CD4-positive, alpha-beta T cell (primary cell): ENCODE measurements at regions of chr22 and their contacts with region 1.

Region 1: DNA sequence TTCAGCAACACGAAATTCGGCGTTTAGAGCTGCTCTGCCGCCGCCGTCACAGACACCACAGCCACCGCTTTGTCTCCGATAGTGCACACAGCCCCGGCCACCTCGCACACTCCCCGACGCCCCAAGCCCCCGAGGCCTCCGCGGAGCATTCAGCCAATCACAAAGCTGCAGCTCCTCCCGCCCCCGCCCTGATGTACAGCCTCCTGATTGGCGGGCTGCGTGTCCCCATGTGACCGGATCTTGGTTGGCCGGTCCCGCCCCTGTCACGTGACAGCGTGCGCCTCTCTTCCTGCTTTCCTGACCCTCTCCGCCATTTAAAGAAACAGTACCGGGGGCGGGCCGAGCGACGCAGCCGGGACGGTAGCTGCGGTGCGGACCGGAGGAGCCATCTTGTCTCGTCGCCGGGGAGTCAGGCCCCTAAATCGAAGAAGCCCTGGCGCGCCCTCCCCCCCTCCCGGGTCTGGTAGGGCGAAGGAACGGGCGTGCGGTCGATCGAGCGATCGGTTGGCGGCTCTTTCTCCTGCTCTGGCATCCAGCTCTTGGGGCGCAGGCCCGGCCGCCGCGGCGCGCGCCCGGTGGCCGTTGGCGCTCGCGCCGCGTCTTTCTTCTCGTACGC is at the start of gene TUG1:
- DNase-seq: peak; percentile 95 to 99 (median 97)
- ATAC-seq: peak; percentile 93
- H3K4me3 ChIP-seq: peak within 1 kb of the TSS; percentile 80
- H3K4me3 Mint-ChIP-seq: peak within 1 kb of the TSS; percentile 97
- H3K27ac ChIP-seq: peak within 1 kb of the TSS; percentile 80 to 91
- H3K27ac Mint-ChIP-seq: peak within 1 kb of the TSS; percentile 98
- H3K4me1 ChIP-seq: peaks cover 23% of the 10 kb centered on the region
- H3K4me1 Mint-ChIP-seq: peaks cover 63% of the 10 kb centered on the region
- H3K27me3 ChIP-seq: no peaks in the 10 kb centered on the region
- H3K27me3 Mint-ChIP-seq: no peaks in the 10 kb centered on the region
- CTCF ChIP-seq: no peak
- total RNA-seq, gene TUG1: 85.8 to 86.2 TPM

Region 2: GRCh38 chr22:30591588-30592359 is 377.3 kb before region 1 on chr22 and contains the start of gene PES1:
- CTCF ChIA-PET with region 1: no interaction called
- POLR2A ChIA-PET with region 1: interaction called, 3 read pairs
- intact Hi-C with region 1: loop called in 1 of 2 experiments (anchors 5 kb)
- DNase-seq: peak; percentile 91 to 99 (median 94)
- ATAC-seq: peak; percentile 96
- H3K4me3 ChIP-seq: peak within 1 kb of the TSS; percentile 96
- H3K4me3 Mint-ChIP-seq: no peak within 1 kb of the TSS
- H3K27ac ChIP-seq: peak within 1 kb of the TSS; percentile 85 to 97
- H3K27ac Mint-ChIP-seq: no peak within 1 kb of the TSS
- H3K4me1 ChIP-seq: peaks cover 16% of the 10 kb centered on the region
- H3K4me1 Mint-ChIP-seq: no peaks in the 10 kb centered on the region
- H3K27me3 ChIP-seq: no peaks in the 10 kb centered on the region
- H3K27me3 Mint-ChIP-seq: no peaks in the 10 kb centered on the region
- CTCF ChIP-seq: no peak
- total RNA-seq, gene PES1: 28.4 to 30.5 TPM

Region 3: DNA sequence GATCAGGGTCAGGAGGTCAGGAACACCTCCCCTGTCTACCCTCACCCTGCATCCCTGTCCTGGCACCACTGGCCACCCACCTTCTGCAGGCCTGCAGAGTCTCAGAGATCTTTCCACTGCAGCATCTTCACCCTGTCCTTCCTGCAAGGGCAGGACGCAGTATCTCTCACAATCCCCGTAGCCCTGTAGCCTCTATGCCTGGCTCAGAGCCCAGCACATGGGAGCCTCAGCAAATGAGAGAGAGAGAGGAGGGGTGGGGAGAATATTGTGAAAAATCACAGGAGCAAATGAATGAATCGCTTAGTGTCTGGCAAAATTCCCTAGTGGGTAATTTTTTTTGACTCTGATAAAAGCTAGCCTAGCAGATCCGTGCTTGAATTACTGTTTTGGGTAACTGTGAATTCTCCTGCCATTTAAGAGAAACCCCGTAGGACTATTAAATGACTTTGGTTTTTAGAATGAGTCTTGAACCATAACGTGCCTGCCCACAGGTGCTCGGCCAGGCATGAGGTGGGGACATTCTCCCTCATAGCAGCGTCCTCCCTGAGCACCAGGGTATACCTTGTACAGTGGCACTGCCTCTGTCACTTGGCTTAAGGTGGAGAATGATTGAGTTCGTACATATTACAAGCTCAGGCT is 92.0 kb before region 1 on chr22:
- CTCF ChIA-PET with region 1: no interaction called
- POLR2A ChIA-PET with region 1: no interaction called
- intact Hi-C with region 1: no loop called
- DNase-seq: peak in 1 of 14 experiments; percentile 1
- ATAC-seq: no peak
- H3K4me3 ChIP-seq: no peak overlapping the region
- H3K4me3 Mint-ChIP-seq: no peak overlapping the region
- H3K27ac ChIP-seq: no peak overlapping the region
- H3K27ac Mint-ChIP-seq: no peak overlapping the region
- H3K4me1 ChIP-seq: no peaks in the 10 kb centered on the region
- H3K4me1 Mint-ChIP-seq: no peaks in the 10 kb centered on the region
- H3K27me3 ChIP-seq: no peaks in the 10 kb centered on the region
- H3K27me3 Mint-ChIP-seq: no peaks in the 10 kb centered on the region
- CTCF ChIP-seq: no peak

Region 4: GRCh38 chr22:30940685-30941362 is 28.2 kb before region 1 on chr22:
- CTCF ChIA-PET with region 1: interaction called, 6 read pairs
- POLR2A ChIA-PET with region 1: interaction called, 104 read pairs
- intact Hi-C with region 1: loop called (anchors 2 kb)
- DNase-seq: peak; percentile 25 to 83 (median 55)
- ATAC-seq: peak; percentile 77
- H3K4me3 ChIP-seq: peak overlapping the region; percentile 65
- H3K4me3 Mint-ChIP-seq: peak overlapping the region; percentile 86
- H3K27ac ChIP-seq: peak overlapping the region; percentile 59 to 70
- H3K27ac Mint-ChIP-seq: peak overlapping the region; percentile 92
- H3K4me1 ChIP-seq: peaks cover 83% of the 10 kb centered on the region
- H3K4me1 Mint-ChIP-seq: peaks cover 85% of the 10 kb centered on the region
- H3K27me3 ChIP-seq: no peaks in the 10 kb centered on the region
- H3K27me3 Mint-ChIP-seq: no peaks in the 10 kb centered on the region
- CTCF ChIP-seq: no peak

Region 5: DNA sequence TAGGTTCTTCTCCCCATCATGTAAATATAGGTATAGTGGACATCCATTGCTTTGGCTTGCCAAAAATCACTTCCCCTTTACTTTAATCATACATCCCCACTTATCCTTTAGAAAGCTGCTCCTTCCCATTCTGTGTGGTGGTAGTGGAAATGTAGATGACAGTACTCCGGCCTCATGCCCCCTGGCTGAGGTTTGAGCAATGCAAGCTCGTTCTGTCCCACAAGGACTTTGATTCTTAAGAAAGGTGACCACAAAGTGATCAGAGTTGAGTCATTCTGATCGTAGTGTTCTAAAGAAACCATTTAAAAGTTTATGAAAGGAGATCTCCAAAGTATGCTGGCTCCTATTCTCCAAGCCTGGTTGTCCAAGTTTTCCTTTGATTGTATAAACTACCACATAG is 10.9 kb after region 1 on chr22:
- CTCF ChIA-PET with region 1: no interaction called
- POLR2A ChIA-PET with region 1: interaction called, 40 read pairs
- intact Hi-C with region 1: no loop called
- DNase-seq: no peak
- ATAC-seq: no peak
- H3K4me3 ChIP-seq: no peak overlapping the region
- H3K4me3 Mint-ChIP-seq: no peak overlapping the region
- H3K27ac ChIP-seq: no peak overlapping the region
- H3K27ac Mint-ChIP-seq: no peak overlapping the region
- H3K4me1 ChIP-seq: no peaks in the 10 kb centered on the region
- H3K4me1 Mint-ChIP-seq: no peaks in the 10 kb centered on the region
- H3K27me3 ChIP-seq: no peaks in the 10 kb centered on the region
- H3K27me3 Mint-ChIP-seq: no peaks in the 10 kb centered on the region
- CTCF ChIP-seq: no peak

Region 6: GRCh38 chr22:31160328-31160978 is 191.4 kb after region 1 on chr22:
- CTCF ChIA-PET with region 1: no interaction called
- POLR2A ChIA-PET with region 1: interaction called, 3 read pairs
- intact Hi-C with region 1: loop called in 1 of 2 experiments (anchors 5 kb)
- DNase-seq: peak in 8 of 14 experiments; percentile 0 to 45 (median 7)
- ATAC-seq: peak; percentile 46
- H3K4me3 ChIP-seq: peak overlapping the region; percentile 96
- H3K4me3 Mint-ChIP-seq: peak overlapping the region; percentile 100
- H3K27ac ChIP-seq: peak overlapping the region; percentile 69 to 94
- H3K27ac Mint-ChIP-seq: peak overlapping the region; percentile 89
- H3K4me1 ChIP-seq: peaks cover 23% of the 10 kb centered on the region
- H3K4me1 Mint-ChIP-seq: peaks cover 48% of the 10 kb centered on the region
- H3K27me3 ChIP-seq: no peaks in the 10 kb centered on the region
- H3K27me3 Mint-ChIP-seq: no peaks in the 10 kb centered on the region
- CTCF ChIP-seq: no peak

Region 7: DNA sequence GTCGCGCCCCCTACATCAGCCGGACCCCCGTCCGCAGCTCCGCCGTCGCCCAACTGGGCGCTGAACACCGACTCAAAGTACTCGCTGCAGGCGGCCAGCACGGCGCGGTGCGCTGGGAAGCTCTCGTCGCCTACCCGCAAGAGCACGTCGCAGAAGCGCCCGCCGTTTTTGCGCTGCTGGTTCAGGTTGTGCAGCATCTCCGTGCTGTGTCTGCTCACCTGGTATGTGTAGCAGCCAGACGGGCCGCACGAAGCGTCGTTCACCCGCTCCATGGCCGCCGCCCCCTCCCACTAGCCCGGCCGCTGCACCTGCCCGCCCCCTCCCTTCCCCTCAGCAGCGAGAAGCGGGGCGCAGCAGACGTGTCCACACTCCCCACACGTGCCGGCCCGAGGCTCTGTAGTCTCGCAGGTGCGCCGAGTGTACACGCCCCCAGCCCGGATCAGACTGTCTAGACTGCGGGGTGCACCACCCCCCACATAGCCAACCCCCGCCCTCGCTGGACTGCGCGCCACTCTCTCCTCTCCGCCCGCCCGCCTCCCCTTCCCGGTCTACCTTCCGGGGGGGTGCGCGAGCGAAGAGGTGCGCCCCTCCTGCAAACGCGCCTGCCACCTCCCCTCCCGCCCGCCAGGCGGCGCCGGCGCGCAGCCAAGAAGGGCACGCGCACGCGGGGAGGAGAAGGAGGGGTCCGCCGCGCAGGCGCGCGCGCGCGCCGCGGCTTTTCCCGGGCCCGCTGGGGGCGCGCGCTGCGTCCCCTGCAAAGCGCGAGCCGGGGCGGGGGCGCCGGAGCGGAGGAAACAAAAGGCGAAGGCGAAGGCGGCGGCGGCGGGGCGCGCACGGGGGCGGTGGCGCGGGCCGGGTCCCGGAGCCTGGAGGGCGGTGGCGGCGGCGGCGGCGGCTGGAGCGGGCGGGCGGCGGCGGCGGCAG is 376.6 kb after region 1 on chr22:
- CTCF ChIA-PET with region 1: no interaction called
- POLR2A ChIA-PET with region 1: interaction called, 8 read pairs
- intact Hi-C with region 1: loop called in 1 of 2 experiments (anchors 5 kb)
- DNase-seq: peak; percentile 84 to 97 (median 90)
- ATAC-seq: peak; percentile 69
- H3K4me3 ChIP-seq: peak overlapping the region; percentile 88
- H3K4me3 Mint-ChIP-seq: peak overlapping the region; percentile 97
- H3K27ac ChIP-seq: peak overlapping the region in 1 of 2 donors; percentile 69
- H3K27ac Mint-ChIP-seq: peak overlapping the region; percentile 95
- H3K4me1 ChIP-seq: peaks cover 65% of the 10 kb centered on the region
- H3K4me1 Mint-ChIP-seq: peaks cover 54% of the 10 kb centered on the region
- H3K27me3 ChIP-seq: no peaks in the 10 kb centered on the region
- H3K27me3 Mint-ChIP-seq: no peaks in the 10 kb centered on the region
- CTCF ChIP-seq: peak; percentile 73